ENCODE measurements at regions of chr16 and their contacts with region 1.

Region 1: DNA sequence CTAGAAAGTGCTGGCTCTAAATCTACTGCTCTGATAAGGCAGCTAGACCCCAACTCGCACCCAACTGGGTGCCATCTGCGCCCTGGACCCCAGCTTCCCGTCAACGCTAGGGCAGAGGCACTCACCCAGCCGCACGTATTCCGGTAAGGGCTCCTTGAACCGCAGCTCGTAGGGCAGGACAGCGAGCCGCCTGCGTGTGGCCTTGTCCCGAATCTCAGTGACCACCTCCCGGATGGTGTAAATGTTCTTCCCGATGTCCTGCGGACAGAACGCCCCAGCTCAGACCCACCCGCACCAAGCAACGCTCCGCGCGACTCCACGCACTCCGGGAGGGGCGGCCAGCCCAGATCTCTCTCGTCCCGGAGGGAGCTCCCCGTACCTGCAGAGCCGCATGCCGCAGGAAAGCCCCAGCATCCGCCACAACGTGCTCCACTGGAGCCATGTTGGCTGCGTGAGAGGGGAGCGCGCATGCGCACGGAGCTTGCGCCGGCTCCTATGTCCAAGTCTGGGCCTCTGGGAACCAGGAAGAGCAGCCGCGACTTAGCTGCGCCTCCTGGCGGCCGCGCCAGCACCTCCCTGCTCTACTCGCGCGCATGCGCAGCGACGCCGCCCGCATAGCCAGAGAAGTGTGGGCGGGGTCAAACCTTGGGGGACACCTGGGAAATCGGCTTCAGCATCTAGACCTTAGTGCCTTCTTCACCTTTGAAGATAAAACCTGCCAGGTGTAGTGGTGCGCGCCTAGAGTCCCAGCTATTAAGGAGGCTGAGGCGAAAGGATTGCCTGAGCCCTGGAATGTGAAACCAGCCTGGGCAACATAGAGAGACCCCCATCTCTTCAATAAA is at the start of gene NOB1:
- DNase-seq: peak; percentile 96 to 98 (median 97)
- H3K4me3 ChIP-seq: peak within 1 kb of the TSS; percentile 83 to 100
- H3K4me3 Mint-ChIP-seq: peak within 1 kb of the TSS; percentile 100
- H3K27ac ChIP-seq: peak within 1 kb of the TSS; percentile 95
- H3K27ac Mint-ChIP-seq: peak within 1 kb of the TSS; percentile 96 to 100 (median 99)
- H3K4me1 ChIP-seq: peaks cover 17% of the 10 kb centered on the region
- H3K4me1 Mint-ChIP-seq: peaks cover 12 to 41% (median 26%) of the 10 kb centered on the region in 4 donors
- H3K27me3 ChIP-seq: no peaks in the 10 kb centered on the region
- H3K27me3 Mint-ChIP-seq: peaks cover 0 to 3% of the 10 kb centered on the region in 2 donors
- total RNA-seq, gene NOB1: 41.0 to 49.9 TPM

Region 2: DNA sequence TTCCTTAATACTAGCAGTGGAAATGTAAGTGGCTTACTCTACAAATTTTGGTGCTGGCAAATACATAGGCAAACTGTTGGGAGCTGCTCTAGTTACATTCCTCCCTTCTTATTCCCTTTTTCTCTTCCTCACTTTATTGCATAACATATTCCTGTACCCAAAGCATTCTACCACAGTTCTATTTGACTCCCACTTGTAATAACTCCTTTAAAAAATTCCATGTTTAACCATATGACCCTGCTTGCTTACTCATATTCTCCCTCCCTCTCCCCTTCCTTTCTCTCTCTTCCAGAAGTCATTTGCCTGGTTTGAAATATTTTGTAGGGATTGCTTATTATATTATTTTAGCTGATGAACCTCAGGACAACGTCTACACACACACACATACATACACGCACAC is 51.1 kb before region 1 on chr16:
- CTCF ChIA-PET with region 1: interaction called, 139 read pairs
- POLR2A ChIA-PET with region 1: interaction called, 41 read pairs
- intact Hi-C with region 1: no loop called
- DNase-seq: no peak
- H3K4me3 ChIP-seq: no peak overlapping the region
- H3K4me3 Mint-ChIP-seq: no peak overlapping the region
- H3K27ac ChIP-seq: no peak overlapping the region
- H3K27ac Mint-ChIP-seq: peak overlapping the region in 4 of 7 donors; percentile 32 to 68 (median 66)
- H3K4me1 ChIP-seq: no peaks in the 10 kb centered on the region
- H3K4me1 Mint-ChIP-seq: peaks cover 0 to 1% (median 0%) of the 10 kb centered on the region in 4 donors
- H3K27me3 ChIP-seq: no peaks in the 10 kb centered on the region
- H3K27me3 Mint-ChIP-seq: no peaks in the 10 kb centered on the region

Region 3: DNA sequence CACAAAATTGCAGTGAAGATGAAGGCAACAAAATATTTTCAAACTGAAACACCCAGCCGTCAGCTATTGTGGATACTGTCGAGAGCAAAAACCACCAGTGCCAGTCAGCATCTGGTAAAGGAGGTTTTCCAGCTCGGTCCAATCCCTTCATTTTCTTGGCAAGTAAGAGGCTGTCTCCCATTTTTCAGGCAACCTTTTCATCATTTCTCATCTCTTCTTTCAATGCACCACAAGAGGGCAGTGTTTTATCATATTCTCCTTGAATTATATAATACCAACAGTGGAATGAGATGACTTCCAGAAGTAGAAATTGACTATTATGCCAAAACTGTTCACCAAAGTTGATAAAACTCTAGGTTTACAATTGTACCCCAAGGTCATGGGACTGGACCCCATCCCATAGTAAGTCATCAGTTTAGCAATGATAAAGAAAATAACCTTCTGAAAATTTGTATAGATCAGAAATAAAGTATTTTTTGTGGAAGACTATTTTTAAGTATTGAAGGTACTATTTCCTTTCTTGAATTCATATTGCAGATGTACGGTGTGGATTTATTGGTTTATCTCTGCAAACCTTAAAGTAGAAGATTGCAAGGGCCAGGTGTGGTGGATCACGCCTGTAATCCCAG is 45.1 kb before region 1 on chr16:
- CTCF ChIA-PET with region 1: interaction called, 139 read pairs
- POLR2A ChIA-PET with region 1: interaction called, 41 read pairs
- intact Hi-C with region 1: loop called (anchors 1 kb)
- DNase-seq: peak in 4 of 5 donors; percentile 49 to 60 (median 58)
- H3K4me3 ChIP-seq: no peak overlapping the region
- H3K4me3 Mint-ChIP-seq: no peak overlapping the region
- H3K27ac ChIP-seq: no peak overlapping the region
- H3K27ac Mint-ChIP-seq: peak overlapping the region in 6 of 7 donors; percentile 0 to 70 (median 38)
- H3K4me1 ChIP-seq: peaks cover 6% of the 10 kb centered on the region
- H3K4me1 Mint-ChIP-seq: peaks cover 0 to 4% (median 2%) of the 10 kb centered on the region in 4 donors
- H3K27me3 ChIP-seq: no peaks in the 10 kb centered on the region
- H3K27me3 Mint-ChIP-seq: no peaks in the 10 kb centered on the region

Region 4: GRCh38 chr16:69717066-69717465 is 37.6 kb before region 1 on chr16:
- CTCF ChIA-PET with region 1: interaction called, 139 read pairs
- POLR2A ChIA-PET with region 1: interaction called, 5 read pairs
- intact Hi-C with region 1: no loop called
- DNase-seq: no peak
- H3K4me3 ChIP-seq: no peak overlapping the region
- H3K4me3 Mint-ChIP-seq: no peak overlapping the region
- H3K27ac ChIP-seq: no peak overlapping the region
- H3K27ac Mint-ChIP-seq: no peak overlapping the region
- H3K4me1 ChIP-seq: no peaks in the 10 kb centered on the region
- H3K4me1 Mint-ChIP-seq: no peaks in the 10 kb centered on the region
- H3K27me3 ChIP-seq: no peaks in the 10 kb centered on the region
- H3K27me3 Mint-ChIP-seq: no peaks in the 10 kb centered on the region

Region 5: GRCh38 chr16:69726296-69727060 is 28.2 kb before region 1 on chr16 and contains the start of gene NQO1:
- CTCF ChIA-PET with region 1: interaction called, 72 read pairs
- POLR2A ChIA-PET with region 1: interaction called, 71 read pairs
- intact Hi-C with region 1: loop called (anchors 1 kb)
- DNase-seq: peak; percentile 79 to 86 (median 83)
- H3K4me3 ChIP-seq: peak within 1 kb of the TSS; percentile 52 to 63
- H3K4me3 Mint-ChIP-seq: peak within 1 kb of the TSS; percentile 87 to 97 (median 94)
- H3K27ac ChIP-seq: peak within 1 kb of the TSS; percentile 49
- H3K27ac Mint-ChIP-seq: peak within 1 kb of the TSS; percentile 85 to 96 (median 92)
- H3K4me1 ChIP-seq: peaks cover 20% of the 10 kb centered on the region
- H3K4me1 Mint-ChIP-seq: peaks cover 13 to 37% (median 16%) of the 10 kb centered on the region in 4 donors
- H3K27me3 ChIP-seq: no peaks in the 10 kb centered on the region
- H3K27me3 Mint-ChIP-seq: no peaks in the 10 kb centered on the region
- total RNA-seq, gene NQO1: 4.8 to 5.9 TPM

Region 6: GRCh38 chr16:69741919-69742904 is 12.5 kb before region 1 on chr16:
- CTCF ChIA-PET with region 1: interaction called, 25 read pairs
- POLR2A ChIA-PET with region 1: interaction called, 11 read pairs
- intact Hi-C with region 1: no loop called
- DNase-seq: no peak
- H3K4me3 ChIP-seq: no peak overlapping the region
- H3K4me3 Mint-ChIP-seq: no peak overlapping the region
- H3K27ac ChIP-seq: no peak overlapping the region
- H3K27ac Mint-ChIP-seq: peak overlapping the region in 1 of 7 donors; percentile 24
- H3K4me1 ChIP-seq: no peaks in the 10 kb centered on the region
- H3K4me1 Mint-ChIP-seq: peaks cover 0 to 2% (median under 1%) of the 10 kb centered on the region in 4 donors
- H3K27me3 ChIP-seq: no peaks in the 10 kb centered on the region
- H3K27me3 Mint-ChIP-seq: no peaks in the 10 kb centered on the region

Measured in CD4-positive, alpha-beta memory T cell (primary cell).